Activated CD8-positive, alpha-beta T cell treated with anti-CD3 and anti-CD28 coated beads, Interleukin-2, amount 10 ng/mL, durations not matched to agents 7 days and 5 days (primary cell): ENCODE measurements at regions of chr11 and their contacts with region 1.

Region 1: DNA sequence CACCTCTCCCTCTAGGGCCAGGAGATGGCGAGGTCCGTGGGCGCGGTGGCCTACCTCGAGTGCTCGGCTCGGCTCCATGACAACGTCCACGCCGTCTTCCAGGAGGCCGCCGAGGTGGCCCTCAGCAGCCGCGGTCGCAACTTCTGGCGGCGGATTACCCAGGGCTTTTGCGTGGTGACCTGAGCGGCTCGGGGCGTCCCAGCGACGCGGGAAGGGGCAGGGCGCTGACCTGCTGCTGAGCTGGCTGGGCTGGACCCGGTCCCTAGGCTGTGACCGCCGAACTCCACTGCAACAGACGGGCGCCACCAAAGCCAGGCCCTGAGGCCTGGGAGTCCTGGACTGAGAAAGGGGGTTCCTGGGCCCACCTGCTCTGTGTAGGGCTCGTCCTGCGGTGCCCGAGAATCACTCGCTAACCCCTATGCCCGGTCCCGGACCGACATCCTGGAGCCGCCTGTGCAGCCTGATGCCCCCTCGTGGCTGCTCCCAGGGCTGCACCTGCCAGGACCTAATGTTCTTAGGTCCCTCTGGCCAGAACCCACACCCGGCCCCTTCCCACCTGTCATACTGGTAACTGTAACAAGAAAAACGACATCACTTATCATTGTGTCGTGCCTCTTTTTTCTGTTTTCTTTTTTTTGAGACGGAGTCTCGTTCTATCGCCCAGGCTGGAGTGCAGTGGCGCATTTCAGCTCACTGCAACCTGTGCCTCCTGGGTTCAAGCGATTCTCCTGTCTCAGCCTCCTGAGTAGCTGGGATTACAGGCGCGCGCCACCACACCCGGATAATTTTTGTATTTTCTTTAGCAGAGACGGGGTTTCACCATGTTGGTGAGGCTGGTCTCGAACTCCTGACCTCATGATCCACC is 15.0 kb downstream of the RHOD start:
- DNase-seq: peak; percentile 82
- ATAC-seq: peak; percentile 92
- H3K4me3 Mint-ChIP-seq: no peak overlapping the region
- H3K27ac Mint-ChIP-seq: no peak overlapping the region
- H3K4me1 Mint-ChIP-seq: no peaks in the 10 kb centered on the region
- H3K27me3 Mint-ChIP-seq: peaks cover 5% of the 10 kb centered on the region

Region 2: GRCh38 chr11:67039989-67040546 is 31.6 kb before region 1 on chr11:
- CTCF ChIA-PET with region 1: no interaction called
- POLR2A ChIA-PET with region 1: no interaction called
- DNase-seq: no peak
- ATAC-seq: no peak
- H3K4me3 Mint-ChIP-seq: no peak overlapping the region
- H3K27ac Mint-ChIP-seq: no peak overlapping the region
- H3K4me1 Mint-ChIP-seq: no peaks in the 10 kb centered on the region
- H3K27me3 Mint-ChIP-seq: peaks cover 8% of the 10 kb centered on the region

Region 3: GRCh38 chr11:67053896-67054842 is 17.5 kb before region 1 on chr11:
- CTCF ChIA-PET with region 1: interaction called, 15 read pairs
- POLR2A ChIA-PET with region 1: no interaction called
- DNase-seq: peak; percentile 62
- ATAC-seq: peak; percentile 67
- H3K4me3 Mint-ChIP-seq: no peak overlapping the region
- H3K27ac Mint-ChIP-seq: no peak overlapping the region
- H3K4me1 Mint-ChIP-seq: peaks cover 7% of the 10 kb centered on the region
- H3K27me3 Mint-ChIP-seq: peaks cover 5% of the 10 kb centered on the region

Region 4: GRCh38 chr11:67303132-67303834 is 231.6 kb after region 1 on chr11 and contains the start of gene SSH3:
- CTCF ChIA-PET with region 1: no interaction called
- POLR2A ChIA-PET with region 1: no interaction called
- DNase-seq: peak; percentile 55
- ATAC-seq: peak; percentile 84
- H3K4me3 Mint-ChIP-seq: peak within 1 kb of the TSS; percentile 55
- H3K27ac Mint-ChIP-seq: peak within 1 kb of the TSS; percentile 43
- H3K4me1 Mint-ChIP-seq: peaks cover 19% of the 10 kb centered on the region
- H3K27me3 Mint-ChIP-seq: no peaks in the 10 kb centered on the region
- total RNA-seq, gene SSH3: 12.0 to 13.0 TPM

Region 5: DNA sequence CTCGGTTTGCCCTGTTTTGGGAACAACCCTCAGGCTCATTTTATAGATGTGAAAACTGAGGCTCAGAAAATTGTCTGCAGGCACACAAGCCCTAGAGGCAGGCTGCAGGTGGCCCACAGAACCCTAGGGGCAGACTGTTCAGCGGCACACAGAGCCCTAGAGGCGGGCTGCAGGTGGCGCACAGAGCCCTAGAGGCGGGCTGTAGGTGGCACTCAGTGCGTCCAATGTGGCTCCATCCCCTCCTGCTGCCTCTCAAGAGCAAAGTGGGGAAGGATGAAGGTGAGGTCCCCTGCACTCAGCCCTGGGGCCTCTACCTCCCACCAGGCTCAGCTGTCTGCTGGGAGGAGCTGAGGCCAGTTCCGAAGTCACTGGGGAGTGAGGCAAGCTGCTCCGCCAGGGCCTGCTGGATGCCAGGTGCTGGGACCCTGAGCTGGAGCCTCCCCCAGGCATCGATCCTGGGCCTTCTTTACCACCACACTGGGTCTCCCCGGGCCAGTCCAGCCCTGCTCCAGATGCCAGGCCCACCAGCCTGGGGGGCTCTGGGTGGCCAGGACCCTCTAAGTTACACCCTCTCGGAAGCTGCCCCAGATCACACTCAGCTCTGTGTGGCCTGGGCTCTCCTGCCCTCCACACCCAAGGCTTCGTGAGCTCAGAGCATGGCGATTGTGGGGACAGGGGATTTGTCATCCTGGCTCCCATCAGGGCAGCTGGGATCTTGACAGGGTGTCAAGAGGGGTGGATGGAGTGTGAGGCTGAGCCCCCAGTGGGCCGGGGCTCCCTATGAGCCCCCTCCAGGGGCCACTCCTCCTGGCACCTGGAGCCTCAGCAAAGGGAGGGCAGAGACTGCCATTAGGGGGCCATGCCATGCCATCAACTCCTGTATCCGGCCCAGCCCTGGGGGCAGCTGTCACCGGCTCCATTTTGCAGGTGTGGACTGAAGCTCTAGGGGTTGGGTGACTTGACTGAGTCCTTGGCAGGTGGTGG is 576.8 kb after region 1 on chr11:
- CTCF ChIA-PET with region 1: no interaction called
- POLR2A ChIA-PET with region 1: no interaction called
- DNase-seq: peak; percentile 78
- ATAC-seq: peak; percentile 84
- H3K4me3 Mint-ChIP-seq: peak overlapping the region; percentile 36
- H3K27ac Mint-ChIP-seq: peak overlapping the region; percentile 95
- H3K4me1 Mint-ChIP-seq: peaks cover 60% of the 10 kb centered on the region
- H3K27me3 Mint-ChIP-seq: no peaks in the 10 kb centered on the region